ENCODE measurements at regions of chr3 and their contacts with region 1.

Region 1: GRCh38 chr3:13623099-13623654 is 74.3 kb downstream of the FBLN2 start:
- DNase-seq: peak; percentile 53 to 55
- H3K4me3 ChIP-seq: no peak overlapping the region
- H3K4me3 Mint-ChIP-seq: peak overlapping the region; percentile 26
- H3K27ac Mint-ChIP-seq: peak overlapping the region; percentile 22
- H3K4me1 ChIP-seq: peaks cover 16% of the 10 kb centered on the region
- H3K4me1 Mint-ChIP-seq: peaks cover 12% of the 10 kb centered on the region
- H3K27me3 ChIP-seq: no peaks in the 10 kb centered on the region
- H3K27me3 Mint-ChIP-seq: no peaks in the 10 kb centered on the region
- CTCF ChIP-seq: no peak

Region 2: GRCh38 chr3:13419505-13420044 is 203.6 kb before region 1 on chr3:
- CTCF ChIA-PET with region 1: no interaction called
- POLR2A ChIA-PET with region 1: no interaction called
- intact Hi-C with region 1: no loop called
- DNase-seq: peak in 1 of 2 experiments; percentile 63
- H3K4me3 ChIP-seq: peak overlapping the region; percentile 80
- H3K4me3 Mint-ChIP-seq: peak overlapping the region; percentile 82
- H3K27ac Mint-ChIP-seq: no peak overlapping the region
- H3K4me1 ChIP-seq: peaks cover 9% of the 10 kb centered on the region
- H3K4me1 Mint-ChIP-seq: peaks cover 8% of the 10 kb centered on the region
- H3K27me3 ChIP-seq: no peaks in the 10 kb centered on the region
- H3K27me3 Mint-ChIP-seq: no peaks in the 10 kb centered on the region
- CTCF ChIP-seq: peak in 1 of 2 experiments; percentile 7

Region 3: DNA sequence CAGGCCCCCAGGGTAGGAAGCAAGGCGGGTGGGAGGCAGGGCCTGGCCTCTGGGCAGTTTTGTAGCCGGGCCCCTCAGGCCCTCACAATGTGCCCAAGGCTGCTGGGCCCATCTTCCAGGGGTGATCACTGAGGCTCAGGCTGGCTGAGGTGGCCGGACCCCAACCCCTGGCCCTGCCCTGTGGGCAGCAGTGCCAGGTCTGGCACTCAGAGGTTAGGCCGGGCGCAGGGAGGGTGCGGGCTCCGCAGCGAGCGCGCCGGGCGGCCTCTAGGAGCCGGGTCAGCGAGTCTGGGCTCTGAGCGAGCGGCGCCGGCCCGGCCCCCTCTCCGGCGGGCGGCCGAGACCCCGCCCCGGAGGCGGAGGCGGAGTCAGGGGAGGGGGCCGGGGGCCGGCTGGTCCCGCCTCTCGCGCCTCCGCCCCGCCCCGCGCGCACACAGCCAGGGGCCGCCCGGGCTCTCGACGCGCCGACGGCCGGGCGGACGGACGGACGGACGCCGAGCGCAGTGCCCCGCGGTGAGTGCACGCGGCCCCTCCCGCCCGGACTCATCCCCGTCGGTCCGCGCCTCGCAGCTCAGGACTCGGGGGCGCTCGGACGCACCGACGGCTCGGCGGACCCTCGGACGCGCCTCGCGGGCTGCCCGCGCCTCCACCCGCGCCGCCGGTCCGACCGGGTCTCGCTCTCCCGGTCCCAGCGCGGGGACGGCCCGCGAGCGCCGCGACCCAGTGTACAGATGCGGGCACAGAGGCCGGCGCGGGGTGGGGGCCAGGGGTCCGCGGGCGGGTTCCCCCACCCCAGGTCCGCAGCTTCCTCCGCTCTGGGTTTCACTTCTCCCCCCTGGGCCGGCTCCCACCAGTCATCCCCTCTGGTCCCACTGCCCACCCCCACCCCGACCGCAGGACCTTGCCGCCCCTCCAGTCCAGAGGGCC is 74.2 kb before region 1 on chr3 and contains the start of gene FBLN2:
- CTCF ChIA-PET with region 1: no interaction called
- POLR2A ChIA-PET with region 1: no interaction called
- intact Hi-C with region 1: loop called (anchors 1 kb)
- DNase-seq: peak; percentile 55 to 87
- H3K4me3 ChIP-seq: peak within 1 kb of the TSS; percentile 46
- H3K4me3 Mint-ChIP-seq: peak within 1 kb of the TSS; percentile 76
- H3K27ac Mint-ChIP-seq: peak within 1 kb of the TSS; percentile 73
- H3K4me1 ChIP-seq: peaks cover 24% of the 10 kb centered on the region
- H3K4me1 Mint-ChIP-seq: peaks cover 32% of the 10 kb centered on the region
- H3K27me3 ChIP-seq: no peaks in the 10 kb centered on the region
- H3K27me3 Mint-ChIP-seq: no peaks in the 10 kb centered on the region
- CTCF ChIP-seq: no peak
- total RNA-seq, gene FBLN2: 36.7 and 48.8 TPM in 2 replicates

Region 4: GRCh38 chr3:13750731-13751130 is 127.6 kb after region 1 on chr3:
- CTCF ChIA-PET with region 1: no interaction called
- POLR2A ChIA-PET with region 1: no interaction called
- intact Hi-C with region 1: no loop called
- DNase-seq: no peak
- H3K4me3 ChIP-seq: no peak overlapping the region
- H3K4me3 Mint-ChIP-seq: no peak overlapping the region
- H3K27ac Mint-ChIP-seq: no peak overlapping the region
- H3K4me1 ChIP-seq: no peaks in the 10 kb centered on the region
- H3K4me1 Mint-ChIP-seq: no peaks in the 10 kb centered on the region
- H3K27me3 ChIP-seq: peaks cover 1% of the 10 kb centered on the region; the same call in 1 of the 2 replicates
- H3K27me3 Mint-ChIP-seq: peaks cover 4% of the 10 kb centered on the region
- CTCF ChIP-seq: no peak

Region 5: DNA sequence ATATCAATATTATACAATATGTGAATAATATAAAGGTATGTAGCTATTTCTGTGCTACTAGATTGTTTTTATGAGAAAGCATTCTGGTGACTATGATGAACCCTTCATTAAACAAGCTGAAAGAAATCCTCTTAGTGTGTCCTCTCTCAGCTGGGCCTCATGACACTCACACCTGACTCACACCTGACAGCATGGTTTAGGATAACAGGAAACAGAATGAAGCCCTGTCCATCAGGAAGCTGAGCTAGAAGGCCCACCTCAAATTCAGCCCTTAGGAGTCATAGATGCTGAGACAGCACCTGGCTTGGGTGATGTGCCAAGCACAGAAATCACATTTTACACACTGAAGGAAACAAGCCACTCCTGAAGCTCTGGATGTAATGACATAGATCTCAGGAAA is 470.7 kb after region 1 on chr3:
- CTCF ChIA-PET with region 1: no interaction called
- POLR2A ChIA-PET with region 1: no interaction called
- intact Hi-C with region 1: no loop called
- DNase-seq: no peak
- H3K4me3 ChIP-seq: no peak overlapping the region
- H3K4me3 Mint-ChIP-seq: no peak overlapping the region
- H3K27ac Mint-ChIP-seq: no peak overlapping the region
- H3K4me1 ChIP-seq: peaks cover 6% of the 10 kb centered on the region
- H3K4me1 Mint-ChIP-seq: no peaks in the 10 kb centered on the region
- H3K27me3 ChIP-seq: no peaks in the 10 kb centered on the region
- H3K27me3 Mint-ChIP-seq: no peaks in the 10 kb centered on the region
- CTCF ChIP-seq: no peak

Region 6: GRCh38 chr3:14522129-14522691 is 899.0 kb after region 1 on chr3:
- CTCF ChIA-PET with region 1: no interaction called
- POLR2A ChIA-PET with region 1: no interaction called
- intact Hi-C with region 1: no loop called
- DNase-seq: peak in 1 of 2 experiments; percentile 15
- H3K4me3 ChIP-seq: no peak overlapping the region
- H3K4me3 Mint-ChIP-seq: no peak overlapping the region
- H3K27ac Mint-ChIP-seq: no peak overlapping the region
- H3K4me1 ChIP-seq: no peaks in the 10 kb centered on the region
- H3K4me1 Mint-ChIP-seq: no peaks in the 10 kb centered on the region
- H3K27me3 ChIP-seq: no peaks in the 10 kb centered on the region
- H3K27me3 Mint-ChIP-seq: no peaks in the 10 kb centered on the region
- CTCF ChIP-seq: no peak